ENCODE measurements at regions of chr11 and their contacts with region 1.

Region 1: GRCh38 chr11:22787551-22788162 is 41.9 kb downstream of the SVIP start:
- DNase-seq: peak in 1 of 2 experiments; percentile 41
- H3K4me3 ChIP-seq: no peak overlapping the region
- H3K4me3 Mint-ChIP-seq: no peak overlapping the region
- H3K27ac Mint-ChIP-seq: no peak overlapping the region
- H3K4me1 ChIP-seq: no peaks in the 10 kb centered on the region
- H3K4me1 Mint-ChIP-seq: peaks cover 3% of the 10 kb centered on the region
- H3K27me3 ChIP-seq: no peaks in the 10 kb centered on the region
- H3K27me3 Mint-ChIP-seq: no peaks in the 10 kb centered on the region
- CTCF ChIP-seq: peak; percentile 65 to 79

Region 2: GRCh38 chr11:22337596-22338485 is 449.8 kb before region 1 on chr11 and contains the start of gene SLC17A6:
- CTCF ChIA-PET with region 1: no interaction called
- POLR2A ChIA-PET with region 1: no interaction called
- intact Hi-C with region 1: loop called (anchors 1 kb)
- DNase-seq: peak in 1 of 2 experiments; percentile 58
- H3K4me3 ChIP-seq: no peak within 1 kb of the TSS
- H3K4me3 Mint-ChIP-seq: no peak within 1 kb of the TSS
- H3K27ac Mint-ChIP-seq: no peak within 1 kb of the TSS
- H3K4me1 ChIP-seq: no peaks in the 10 kb centered on the region
- H3K4me1 Mint-ChIP-seq: no peaks in the 10 kb centered on the region
- H3K27me3 ChIP-seq: no peaks in the 10 kb centered on the region
- H3K27me3 Mint-ChIP-seq: peaks cover 12% of the 10 kb centered on the region
- CTCF ChIP-seq: no peak
- total RNA-seq, gene SLC17A6: not detected in 2 replicates

Region 3: GRCh38 chr11:22426915-22427314 is 360.7 kb before region 1 on chr11:
- CTCF ChIA-PET with region 1: no interaction called
- POLR2A ChIA-PET with region 1: no interaction called
- intact Hi-C with region 1: loop called (anchors 1 kb)
- DNase-seq: no peak
- H3K4me3 ChIP-seq: no peak overlapping the region
- H3K4me3 Mint-ChIP-seq: no peak overlapping the region
- H3K27ac Mint-ChIP-seq: no peak overlapping the region
- H3K4me1 ChIP-seq: no peaks in the 10 kb centered on the region
- H3K4me1 Mint-ChIP-seq: no peaks in the 10 kb centered on the region
- H3K27me3 ChIP-seq: no peaks in the 10 kb centered on the region
- H3K27me3 Mint-ChIP-seq: peaks cover 8% of the 10 kb centered on the region
- CTCF ChIP-seq: peak in 1 of 2 experiments; percentile 6

Region 4: GRCh38 chr11:22539821-22540256 is 247.8 kb before region 1 on chr11:
- CTCF ChIA-PET with region 1: interaction called, 3 read pairs
- POLR2A ChIA-PET with region 1: no interaction called
- intact Hi-C with region 1: loop called (anchors 5 kb)
- DNase-seq: peak in 1 of 2 experiments; percentile 31
- H3K4me3 ChIP-seq: no peak overlapping the region
- H3K4me3 Mint-ChIP-seq: no peak overlapping the region
- H3K27ac Mint-ChIP-seq: no peak overlapping the region
- H3K4me1 ChIP-seq: no peaks in the 10 kb centered on the region
- H3K4me1 Mint-ChIP-seq: no peaks in the 10 kb centered on the region
- H3K27me3 ChIP-seq: no peaks in the 10 kb centered on the region
- H3K27me3 Mint-ChIP-seq: peaks cover 8% of the 10 kb centered on the region
- CTCF ChIP-seq: peak; percentile 39 to 56

Region 5: GRCh38 chr11:22634897-22635629 is 152.6 kb before region 1 on chr11:
- CTCF ChIA-PET with region 1: no interaction called
- POLR2A ChIA-PET with region 1: no interaction called
- intact Hi-C with region 1: no loop called
- DNase-seq: peak; percentile 56 to 78
- H3K4me3 ChIP-seq: no peak overlapping the region
- H3K4me3 Mint-ChIP-seq: peak overlapping the region; percentile 37
- H3K27ac Mint-ChIP-seq: peak overlapping the region; percentile 71
- H3K4me1 ChIP-seq: peaks cover 18% of the 10 kb centered on the region
- H3K4me1 Mint-ChIP-seq: peaks cover 10% of the 10 kb centered on the region
- H3K27me3 ChIP-seq: no peaks in the 10 kb centered on the region
- H3K27me3 Mint-ChIP-seq: no peaks in the 10 kb centered on the region
- CTCF ChIP-seq: no peak